Dendritic cell treated with granulocyte-macrophage colony-stimulating factor and Interleukin-4, amounts not matched to agents 40 ng/mL and 50 ng/mL, for 4 days (primary cell): ENCODE measurements at regions of chr9 and their contacts with region 1.

Region 1: GRCh38 chr9:121992571-121993212 is 100.4 kb downstream of the TTLL11 start:
- H3K4me3 Mint-ChIP-seq: no peak overlapping the region
- H3K27ac Mint-ChIP-seq: no peak overlapping the region
- H3K4me1 Mint-ChIP-seq: peaks cover 5% of the 10 kb centered on the region
- H3K27me3 Mint-ChIP-seq: no peaks in the 10 kb centered on the region

Region 2: DNA sequence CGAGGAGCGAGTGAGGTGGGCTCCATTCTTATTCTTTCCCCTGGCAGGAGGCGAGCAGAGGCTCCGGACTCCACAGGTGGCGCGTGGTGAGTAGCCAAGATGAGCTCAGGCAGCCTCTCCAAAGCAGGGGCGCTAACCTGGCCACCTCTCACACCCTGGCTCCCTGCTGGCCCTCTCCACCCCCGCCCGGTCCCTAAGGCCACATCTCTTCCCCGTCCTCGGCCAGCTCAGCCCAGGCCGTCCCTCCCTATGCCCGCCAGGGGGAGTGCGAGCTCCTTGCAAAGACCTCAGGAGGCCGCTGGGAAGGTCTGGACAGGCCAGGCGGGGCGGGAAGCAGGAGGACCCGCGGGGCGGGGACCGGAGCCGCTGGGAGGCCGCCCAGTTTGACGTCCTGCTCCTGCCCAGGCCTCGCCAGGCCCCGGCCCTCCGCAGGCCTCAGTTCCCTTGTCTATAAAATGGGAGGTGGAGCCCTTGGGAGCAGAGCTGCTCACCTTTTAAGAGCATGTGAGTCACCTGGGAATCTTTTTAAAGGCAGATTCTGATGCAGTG is 446.7 kb before region 1 on chr9:
- intact Hi-C with region 1: loop called (anchors 1 kb)
- H3K4me3 Mint-ChIP-seq: no peak overlapping the region
- H3K27ac Mint-ChIP-seq: no peak overlapping the region
- H3K4me1 Mint-ChIP-seq: no peaks in the 10 kb centered on the region
- H3K27me3 Mint-ChIP-seq: peaks cover 51% of the 10 kb centered on the region

Region 3: GRCh38 chr9:121700163-121700831 is 292.4 kb before region 1 on chr9:
- intact Hi-C with region 1: loop called (anchors 5 kb)
- H3K4me3 Mint-ChIP-seq: no peak overlapping the region
- H3K27ac Mint-ChIP-seq: no peak overlapping the region
- H3K4me1 Mint-ChIP-seq: peaks cover 27% of the 10 kb centered on the region
- H3K27me3 Mint-ChIP-seq: peaks cover 87% of the 10 kb centered on the region

Region 4: GRCh38 chr9:121954477-121955140 is 38.1 kb before region 1 on chr9:
- intact Hi-C with region 1: no loop called
- H3K4me3 Mint-ChIP-seq: no peak overlapping the region
- H3K27ac Mint-ChIP-seq: no peak overlapping the region
- H3K4me1 Mint-ChIP-seq: peaks cover 6% of the 10 kb centered on the region
- H3K27me3 Mint-ChIP-seq: peaks cover 2% of the 10 kb centered on the region